Heart right ventricle (tissue), 16 donors: ENCODE measurements at regions of chr12 and their contacts with region 1.

Region 1: GRCh38 chr12:15789220-15790171 is at the start of gene EPS8:
- DNase-seq: peak; percentile 92 to 94
- ATAC-seq: peak; percentile 94 to 100 (median 96)
- H3K4me3 ChIP-seq: peak within 1 kb of the TSS; percentile 62 to 90 (median 84)
- H3K27ac ChIP-seq: peak within 1 kb of the TSS; percentile 83 to 93 (median 88)
- H3K4me1 ChIP-seq: peaks cover 0 to 28% (median 7%) of the 10 kb centered on the region in 9 donors
- H3K27me3 ChIP-seq: peaks cover 0 to 27% (median 0%) of the 10 kb centered on the region in 7 donors
- CTCF ChIP-seq: peak in 2 of 9 donors; percentile 16 to 26
- total RNA-seq, gene EPS8: 7.7 to 38.6 (median 14.0) TPM

Region 2: GRCh38 chr12:15590180-15590826 is 199.2 kb before region 1 on chr12:
- intact Hi-C with region 1: loop called in 6 of 10 experiments (anchors 5 to 10 kb)
- DNase-seq: peak in 1 of 2 donors; percentile 54
- ATAC-seq: peak; percentile 70 to 92 (median 82)
- H3K4me3 ChIP-seq: peak overlapping the region in 7 of 10 donors; percentile 1 to 45 (median 31)
- H3K27ac ChIP-seq: peak overlapping the region in 8 of 10 donors; percentile 19 to 64 (median 44)
- H3K4me1 ChIP-seq: peaks cover 0 to 11% (median 4%) of the 10 kb centered on the region in 9 donors
- H3K27me3 ChIP-seq: peaks cover 0 to 11% (median 0%) of the 10 kb centered on the region in 7 donors
- CTCF ChIP-seq: peak; percentile 77 to 97 (median 89)

Region 3: DNA sequence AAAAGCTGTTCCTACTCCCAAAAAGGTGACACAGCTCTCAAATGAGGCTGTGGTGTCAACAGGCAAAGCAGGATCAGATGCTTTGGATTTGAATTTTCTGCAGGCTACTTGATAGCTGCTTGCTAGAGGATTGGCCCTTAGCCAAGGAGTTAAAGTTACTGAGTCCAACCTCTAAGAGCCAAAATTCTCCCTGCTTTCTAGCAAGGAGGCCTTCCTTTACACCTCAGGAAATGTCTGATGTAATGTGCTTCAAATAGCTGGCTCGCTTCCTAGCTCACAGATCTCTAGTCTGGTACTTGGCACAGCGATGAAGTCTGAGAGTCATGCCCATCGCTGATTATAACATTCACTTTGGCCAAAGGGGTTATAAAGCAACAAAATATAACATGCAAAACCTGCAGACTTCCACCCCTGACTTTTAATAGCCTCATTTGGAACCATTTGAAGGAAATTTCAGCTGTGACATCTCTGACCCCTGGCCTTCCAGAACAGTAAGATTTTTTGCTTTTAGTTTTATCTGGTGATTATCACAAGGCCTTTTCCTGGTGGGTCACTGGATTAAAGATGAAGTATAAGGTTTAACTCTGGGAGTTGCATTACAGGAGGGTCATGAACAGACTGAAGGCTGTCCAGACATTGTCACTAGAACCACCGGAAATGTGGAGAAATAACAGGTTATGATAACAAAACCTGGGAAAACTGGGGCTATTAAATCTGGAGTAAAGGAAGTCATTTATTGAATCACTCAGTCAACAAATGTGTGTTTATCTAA is 190.0 kb before region 1 on chr12:
- intact Hi-C with region 1: loop called in 6 of 10 experiments (anchors 5 to 10 kb)
- DNase-seq: peak in 1 of 2 donors; percentile 70
- ATAC-seq: peak; percentile 85 to 94 (median 90)
- H3K4me3 ChIP-seq: no peak overlapping the region
- H3K27ac ChIP-seq: peak overlapping the region in 8 of 10 donors; percentile 5 to 53 (median 45)
- H3K4me1 ChIP-seq: peaks cover 0 to 53% (median 38%) of the 10 kb centered on the region in 9 donors
- H3K27me3 ChIP-seq: no peaks in the 10 kb centered on the region
- CTCF ChIP-seq: no peak

Region 4: GRCh38 chr12:15629108-15629507 is 160.4 kb before region 1 on chr12:
- intact Hi-C with region 1: loop called in 1 of 10 experiments (anchors 5 kb)
- DNase-seq: peak; percentile 14 to 82
- ATAC-seq: peak; percentile 91 to 98 (median 97)
- H3K4me3 ChIP-seq: no peak overlapping the region
- H3K27ac ChIP-seq: peak overlapping the region in 9 of 10 donors; percentile 61 to 87 (median 81)
- H3K4me1 ChIP-seq: peaks cover 0 to 61% (median 37%) of the 10 kb centered on the region in 9 donors
- H3K27me3 ChIP-seq: no peaks in the 10 kb centered on the region
- CTCF ChIP-seq: no peak

Region 5: DNA sequence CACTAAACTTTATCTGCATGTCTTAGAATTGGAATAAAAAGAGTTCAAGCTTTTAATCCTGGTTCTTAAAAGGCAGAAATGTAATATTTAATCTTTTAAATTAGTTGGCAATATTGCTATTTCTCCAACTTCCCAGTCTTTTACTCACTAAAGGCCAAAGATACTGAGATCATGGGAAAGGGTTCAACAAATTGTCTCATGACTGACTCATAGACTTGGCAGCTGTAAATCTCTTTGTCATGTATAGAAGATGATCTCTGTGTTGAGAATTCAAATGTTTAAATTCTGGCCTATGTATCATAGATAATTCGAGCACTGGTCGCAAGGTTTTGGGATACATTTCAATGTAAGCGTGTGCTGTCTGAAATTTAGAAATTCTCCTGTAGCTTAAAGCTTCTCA is 52.6 kb after region 1 on chr12:
- intact Hi-C with region 1: loop called in 3 of 10 experiments (anchors 5 to 10 kb)
- DNase-seq: no peak
- ATAC-seq: peak in 1 of 8 donors; percentile 61
- H3K4me3 ChIP-seq: no peak overlapping the region
- H3K27ac ChIP-seq: peak overlapping the region in 4 of 10 donors; percentile 12 to 23 (median 18)
- H3K4me1 ChIP-seq: peaks cover 0 to 18% (median 0%) of the 10 kb centered on the region in 9 donors
- H3K27me3 ChIP-seq: no peaks in the 10 kb centered on the region
- CTCF ChIP-seq: no peak

Region 6: DNA sequence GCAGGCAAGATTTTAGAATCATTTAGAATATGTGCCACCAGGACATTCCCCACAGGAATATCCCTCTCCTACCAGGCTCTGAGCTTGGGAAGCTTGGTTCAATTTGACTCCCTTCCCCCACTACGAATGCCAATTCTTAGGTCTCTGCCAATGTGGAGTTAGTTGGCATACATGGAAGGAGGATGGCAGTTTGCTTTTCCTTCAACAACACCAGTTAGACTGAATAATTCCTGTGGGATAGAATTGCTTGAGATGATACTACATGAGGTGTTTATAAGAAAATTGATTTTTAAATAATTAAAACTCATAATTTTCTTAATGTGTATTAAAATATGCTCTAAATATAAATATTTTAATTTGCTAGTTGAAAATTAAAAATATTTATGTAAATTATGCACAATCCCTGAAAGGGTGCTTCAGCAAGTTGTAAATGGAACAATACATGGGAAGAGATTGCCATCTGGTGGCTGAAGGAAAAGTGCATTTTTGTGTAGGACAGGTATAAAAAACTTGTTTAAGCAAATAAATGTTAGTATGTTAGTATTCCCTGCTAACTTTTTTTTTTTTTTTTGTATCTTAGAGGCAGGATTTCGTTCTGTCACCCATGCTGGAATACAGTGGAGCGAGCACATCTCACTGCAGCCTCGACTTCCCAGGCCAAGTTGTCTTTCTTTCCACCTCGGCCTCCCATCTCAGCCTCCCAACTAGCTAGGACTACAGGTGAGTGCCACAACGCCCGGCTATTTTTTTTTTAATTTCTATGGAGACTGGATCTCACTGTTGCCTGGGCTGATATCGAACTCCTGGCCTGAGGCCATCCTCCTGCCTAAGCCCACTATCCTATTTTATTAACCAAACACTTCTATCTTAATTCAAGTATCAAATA is 66.8 kb after region 1 on chr12:
- intact Hi-C with region 1: loop called in 1 of 10 experiments (anchors 1 kb)
- DNase-seq: peak in 1 of 2 donors; percentile 62
- ATAC-seq: peak in 6 of 8 donors; percentile 57 to 77 (median 72)
- H3K4me3 ChIP-seq: no peak overlapping the region
- H3K27ac ChIP-seq: peak overlapping the region in 3 of 10 donors; percentile 1 to 48 (median 23)
- H3K4me1 ChIP-seq: peaks cover 0 to 3% (median 0%) of the 10 kb centered on the region in 9 donors
- H3K27me3 ChIP-seq: peaks cover 0 to 13% (median 5%) of the 10 kb centered on the region in 7 donors
- CTCF ChIP-seq: peak; percentile 64 to 96 (median 83)